A673 (cell line): ENCODE measurements at regions of chr13 and their contacts with region 1.

Region 1: GRCh38 chr13:78978381-78978998 is 319.5 kb upstream of the OBI1 start:
- DNase-seq: peak; percentile 76
- H3K4me3 ChIP-seq: no peak overlapping the region
- H3K27ac ChIP-seq: no peak overlapping the region
- H3K4me1 ChIP-seq: no peaks in the 10 kb centered on the region
- H3K27me3 ChIP-seq: peaks cover 9% of the 10 kb centered on the region
- CTCF ChIP-seq: peak; percentile 77

Region 2: GRCh38 chr13:78241278-78241919 is 737.1 kb before region 1 on chr13:
- CTCF ChIA-PET with region 1: interaction called, 11 read pairs
- POLR2A ChIA-PET with region 1: no interaction called
- intact Hi-C with region 1: loop called (anchors 2 kb)
- DNase-seq: peak; percentile 73
- H3K4me3 ChIP-seq: no peak overlapping the region
- H3K27ac ChIP-seq: no peak overlapping the region
- H3K4me1 ChIP-seq: no peaks in the 10 kb centered on the region
- H3K27me3 ChIP-seq: no peaks in the 10 kb centered on the region
- CTCF ChIP-seq: peak; percentile 90

Region 3: DNA sequence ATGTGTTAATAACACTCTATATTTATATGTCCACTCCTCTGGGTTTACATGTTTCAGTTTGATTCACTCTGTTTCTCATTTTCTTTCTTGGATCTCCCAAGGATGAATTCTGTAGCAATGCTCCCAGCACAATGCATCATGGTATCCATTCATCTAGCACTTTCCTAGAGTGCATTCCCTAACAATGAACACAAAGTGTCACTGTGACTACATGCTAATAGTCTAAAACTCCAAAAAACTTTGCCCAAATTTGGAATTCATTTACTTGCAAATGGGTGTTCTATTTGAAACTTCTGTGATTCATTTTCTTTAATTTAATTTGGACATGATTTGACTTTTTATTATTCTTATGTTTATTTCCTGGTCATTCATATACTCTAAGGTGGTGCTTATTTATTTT is 661.5 kb before region 1 on chr13:
- CTCF ChIA-PET with region 1: no interaction called
- POLR2A ChIA-PET with region 1: no interaction called
- intact Hi-C with region 1: loop called (anchors 1 kb)
- DNase-seq: peak; percentile 60
- H3K4me3 ChIP-seq: no peak overlapping the region
- H3K27ac ChIP-seq: no peak overlapping the region
- H3K4me1 ChIP-seq: no peaks in the 10 kb centered on the region
- H3K27me3 ChIP-seq: no peaks in the 10 kb centered on the region
- CTCF ChIP-seq: peak; percentile 71

Region 4: DNA sequence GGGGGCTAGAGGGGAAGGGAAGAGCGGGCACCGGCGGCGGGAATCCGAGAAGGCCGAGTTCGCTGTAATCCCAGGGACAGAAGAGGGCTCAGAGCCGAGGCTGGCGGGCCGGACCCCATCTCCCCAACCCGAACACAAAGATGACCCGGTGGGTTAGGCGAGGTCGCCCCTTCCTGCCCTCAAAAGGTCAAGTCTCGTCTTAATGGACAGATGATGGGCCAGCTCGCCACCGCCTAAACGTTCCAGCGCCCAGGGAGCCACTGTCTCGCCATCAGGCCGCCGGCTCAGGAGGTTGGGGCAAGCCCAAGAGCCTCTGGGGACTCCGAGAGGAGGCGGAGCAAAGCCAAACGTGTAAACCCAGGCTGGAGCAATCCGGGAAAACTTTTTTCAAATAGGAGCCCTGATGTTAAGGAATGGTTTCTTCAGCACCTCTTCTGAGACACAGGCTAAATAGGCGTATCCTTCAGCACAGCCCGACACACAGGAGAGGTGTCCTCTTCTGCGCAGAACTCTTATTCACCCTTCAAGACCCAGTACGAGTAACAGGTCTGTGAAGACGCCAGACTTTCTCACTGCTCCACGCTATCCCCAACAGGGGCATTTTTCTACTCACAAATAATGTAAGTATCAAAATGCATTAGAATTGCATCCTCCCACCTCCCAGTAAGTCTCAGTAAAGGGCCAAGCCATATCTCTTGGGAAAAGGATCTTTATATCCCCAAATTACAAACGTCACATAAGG is 368.9 kb before region 1 on chr13:
- CTCF ChIA-PET with region 1: interaction called, 3 read pairs
- POLR2A ChIA-PET with region 1: no interaction called
- intact Hi-C with region 1: loop called (anchors 5 kb)
- DNase-seq: peak; percentile 61
- H3K4me3 ChIP-seq: peak overlapping the region; percentile 53
- H3K27ac ChIP-seq: peak overlapping the region; percentile 60
- H3K4me1 ChIP-seq: peaks cover 25% of the 10 kb centered on the region
- H3K27me3 ChIP-seq: peaks cover 48% of the 10 kb centered on the region
- CTCF ChIP-seq: no peak

Region 5: GRCh38 chr13:78787190-78787589 is 191.3 kb before region 1 on chr13:
- CTCF ChIA-PET with region 1: no interaction called
- POLR2A ChIA-PET with region 1: no interaction called
- intact Hi-C with region 1: loop called (anchors 2 kb)
- DNase-seq: peak; percentile 69
- H3K4me3 ChIP-seq: no peak overlapping the region
- H3K27ac ChIP-seq: peak overlapping the region; percentile 92
- H3K4me1 ChIP-seq: peaks cover 69% of the 10 kb centered on the region
- H3K27me3 ChIP-seq: peaks cover 24% of the 10 kb centered on the region
- CTCF ChIP-seq: no peak

Region 6: DNA sequence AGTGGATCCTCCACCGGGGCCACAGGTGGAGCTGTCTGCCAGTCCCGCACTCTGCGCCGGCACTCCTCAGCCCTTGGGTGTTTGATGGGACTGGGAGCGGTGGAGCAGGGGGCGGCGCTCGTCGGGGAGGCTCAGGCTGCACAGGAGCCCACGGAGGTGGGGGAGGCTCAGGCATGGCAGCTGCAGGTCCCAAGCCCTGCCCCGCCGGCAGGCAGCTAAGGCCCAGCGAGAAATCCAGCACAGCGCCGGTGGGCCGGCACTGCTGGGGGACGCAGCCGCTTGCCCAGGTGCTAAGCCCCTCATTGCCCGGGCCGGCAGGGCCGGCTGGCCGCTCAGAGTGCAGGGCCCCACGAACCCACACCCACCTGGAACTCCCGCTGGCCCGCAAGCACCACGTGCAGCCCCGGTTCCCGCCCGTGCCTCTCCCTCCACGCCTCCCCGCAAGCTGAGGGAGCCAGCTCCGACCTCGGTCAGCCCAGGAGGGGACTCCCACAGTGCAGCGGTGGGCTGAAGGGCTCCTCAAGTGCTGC is 141.2 kb after region 1 on chr13:
- CTCF ChIA-PET with region 1: no interaction called
- POLR2A ChIA-PET with region 1: no interaction called
- intact Hi-C with region 1: no loop called
- DNase-seq: no peak
- H3K4me3 ChIP-seq: no peak overlapping the region
- H3K27ac ChIP-seq: no peak overlapping the region
- H3K4me1 ChIP-seq: no peaks in the 10 kb centered on the region
- H3K27me3 ChIP-seq: no peaks in the 10 kb centered on the region
- CTCF ChIP-seq: no peak

Region 7: DNA sequence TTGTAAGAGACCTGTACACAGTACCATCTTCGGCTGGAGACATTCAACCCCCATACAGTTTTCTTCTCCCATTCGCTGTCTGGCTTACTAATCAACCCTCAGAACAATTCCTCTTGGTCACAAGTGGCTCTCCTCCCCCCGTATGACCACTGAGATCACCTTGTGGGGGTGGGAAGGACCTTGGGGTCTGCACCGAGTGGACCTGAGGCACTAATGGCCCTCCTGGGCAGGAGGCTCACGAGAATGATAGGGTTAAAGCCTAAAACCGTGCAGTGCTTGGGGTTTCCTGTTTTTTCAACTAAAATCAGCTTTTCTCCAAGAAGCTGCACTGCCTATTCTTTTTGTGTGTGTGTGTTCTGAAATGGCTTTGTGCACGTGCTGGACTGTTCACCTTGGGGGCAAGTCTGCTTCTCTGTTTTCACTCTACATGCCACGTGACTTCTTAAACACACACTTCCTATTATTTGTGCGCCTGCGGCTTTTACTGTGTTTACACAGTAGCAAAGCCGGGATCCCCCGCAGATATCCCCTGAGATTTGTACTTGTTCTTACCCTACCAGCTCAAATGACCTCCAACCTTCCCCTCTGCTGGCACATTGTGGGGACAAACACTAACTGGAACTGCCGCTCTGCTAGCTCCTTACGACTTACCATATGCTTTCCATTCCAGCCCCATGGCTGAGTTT is 415.2 kb after region 1 on chr13:
- CTCF ChIA-PET with region 1: no interaction called
- POLR2A ChIA-PET with region 1: no interaction called
- intact Hi-C with region 1: loop called (anchors 5 kb)
- DNase-seq: no peak
- H3K4me3 ChIP-seq: no peak overlapping the region
- H3K27ac ChIP-seq: no peak overlapping the region
- H3K4me1 ChIP-seq: peaks cover 9% of the 10 kb centered on the region
- H3K27me3 ChIP-seq: no peaks in the 10 kb centered on the region
- CTCF ChIP-seq: no peak